SK-N-SH (cell line): ENCODE measurements at regions of chr12 and their contacts with region 1.

Region 1: GRCh38 chr12:121230538-121230907 is 20.6 kb downstream of the P2RX4 start:
- DNase-seq: no peak
- H3K4me3 ChIP-seq: no peak overlapping the region
- H3K27ac ChIP-seq: no peak overlapping the region
- H3K4me1 ChIP-seq: no peaks in the 10 kb centered on the region
- H3K27me3 ChIP-seq: no peaks in the 10 kb centered on the region
- CTCF ChIP-seq: no peak
- EP300 ChIP-seq: no peak
- RAD21 ChIP-seq: no peak

Region 2: DNA sequence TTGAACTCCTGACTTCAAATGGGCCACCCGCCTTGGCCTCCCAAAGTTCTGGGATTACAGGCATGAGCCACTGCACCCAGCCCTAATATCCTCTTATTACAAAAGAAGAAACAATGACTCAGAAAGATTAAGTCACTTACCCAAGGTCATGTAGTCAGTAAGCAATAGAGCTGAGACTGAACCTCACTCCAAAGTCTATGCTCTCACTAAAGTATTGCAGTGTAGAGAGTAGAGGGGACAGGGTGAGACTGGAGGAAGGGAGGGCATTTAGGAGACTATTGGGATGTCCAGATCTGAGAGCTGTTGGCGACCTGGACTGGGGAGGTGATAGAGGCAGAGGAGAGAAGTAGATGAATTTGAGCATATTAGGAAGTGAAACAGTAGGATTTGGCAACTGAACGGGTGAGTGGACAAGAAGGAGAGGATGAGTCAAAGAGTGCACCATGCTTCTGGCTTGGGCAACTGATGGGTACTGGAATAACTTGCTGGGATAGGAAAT is 86.1 kb before region 1 on chr12:
- CTCF ChIA-PET with region 1: no interaction called
- POLR2A ChIA-PET with region 1: no interaction called
- DNase-seq: no peak
- H3K4me3 ChIP-seq: no peak overlapping the region
- H3K27ac ChIP-seq: no peak overlapping the region
- H3K4me1 ChIP-seq: no peaks in the 10 kb centered on the region
- H3K27me3 ChIP-seq: no peaks in the 10 kb centered on the region
- CTCF ChIP-seq: no peak
- EP300 ChIP-seq: no peak
- RAD21 ChIP-seq: no peak

Region 3: GRCh38 chr12:121217063-121217462 is 13.5 kb before region 1 on chr12:
- CTCF ChIA-PET with region 1: interaction called, 21 read pairs
- POLR2A ChIA-PET with region 1: no interaction called
- DNase-seq: no peak
- H3K4me3 ChIP-seq: no peak overlapping the region
- H3K27ac ChIP-seq: no peak overlapping the region
- H3K4me1 ChIP-seq: peaks cover 3 to 7% of the 10 kb centered on the region in 2 experiments; a peak in 3 of 4 replicates
- H3K27me3 ChIP-seq: no peaks in the 10 kb centered on the region
- CTCF ChIP-seq: no peak
- EP300 ChIP-seq: no peak
- RAD21 ChIP-seq: no peak

Region 4: DNA sequence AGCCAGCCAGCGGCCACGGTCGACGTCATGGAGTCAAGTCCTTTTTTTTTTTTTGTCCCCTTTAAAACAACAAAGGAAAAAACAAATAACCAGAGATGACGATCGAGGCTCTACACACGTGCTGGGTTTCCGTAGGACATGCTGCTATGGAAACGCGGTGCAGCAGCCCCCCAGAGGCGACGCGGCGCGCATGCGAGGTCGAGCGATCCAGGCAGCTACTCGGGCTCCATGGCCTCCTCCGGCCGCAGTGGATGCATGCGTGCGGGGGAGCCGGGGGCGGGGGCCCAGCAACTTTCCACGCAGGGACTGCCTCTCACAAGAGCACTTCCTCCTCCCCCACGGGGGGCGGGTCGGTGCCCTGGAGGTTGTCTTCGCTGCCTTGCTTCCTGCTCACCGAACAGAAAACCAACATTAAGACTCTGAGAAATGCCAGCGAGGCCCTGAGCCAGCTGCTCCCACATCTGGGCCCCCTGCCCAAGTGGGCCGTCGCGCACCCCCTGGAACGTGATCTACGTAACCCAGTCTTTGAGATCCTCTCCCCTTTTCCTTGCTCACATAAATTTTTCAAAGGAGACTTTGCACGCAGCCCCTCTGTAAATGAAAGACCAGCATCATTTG is 10.1 kb after region 1 on chr12:
- CTCF ChIA-PET with region 1: interaction called, 35 read pairs
- POLR2A ChIA-PET with region 1: no interaction called
- DNase-seq: no peak
- H3K4me3 ChIP-seq: no peak overlapping the region
- H3K27ac ChIP-seq: no peak overlapping the region
- H3K4me1 ChIP-seq: peaks cover 0 to 4% of the 10 kb centered on the region in 2 experiments; a peak in 1 of 4 replicates
- H3K27me3 ChIP-seq: no peaks in the 10 kb centered on the region
- CTCF ChIP-seq: no peak
- EP300 ChIP-seq: no peak
- RAD21 ChIP-seq: no peak